Caco-2 (cell line): ENCODE measurements at regions of chr3 and their contacts with region 1.

Region 1: GRCh38 chr3:123285066-123285465 is 83.3 kb downstream of the SEC22A start:
- DNase-seq: no peak
- H3K4me3 ChIP-seq: no peak overlapping the region
- H3K4me3 Mint-ChIP-seq: no peak overlapping the region
- H3K27ac Mint-ChIP-seq: no peak overlapping the region
- H3K4me1 ChIP-seq: no peaks in the 10 kb centered on the region
- H3K4me1 Mint-ChIP-seq: no peaks in the 10 kb centered on the region
- H3K27me3 ChIP-seq: no peaks in the 10 kb centered on the region
- H3K27me3 Mint-ChIP-seq: peaks cover 3% of the 10 kb centered on the region
- CTCF ChIP-seq: no peak

Region 2: DNA sequence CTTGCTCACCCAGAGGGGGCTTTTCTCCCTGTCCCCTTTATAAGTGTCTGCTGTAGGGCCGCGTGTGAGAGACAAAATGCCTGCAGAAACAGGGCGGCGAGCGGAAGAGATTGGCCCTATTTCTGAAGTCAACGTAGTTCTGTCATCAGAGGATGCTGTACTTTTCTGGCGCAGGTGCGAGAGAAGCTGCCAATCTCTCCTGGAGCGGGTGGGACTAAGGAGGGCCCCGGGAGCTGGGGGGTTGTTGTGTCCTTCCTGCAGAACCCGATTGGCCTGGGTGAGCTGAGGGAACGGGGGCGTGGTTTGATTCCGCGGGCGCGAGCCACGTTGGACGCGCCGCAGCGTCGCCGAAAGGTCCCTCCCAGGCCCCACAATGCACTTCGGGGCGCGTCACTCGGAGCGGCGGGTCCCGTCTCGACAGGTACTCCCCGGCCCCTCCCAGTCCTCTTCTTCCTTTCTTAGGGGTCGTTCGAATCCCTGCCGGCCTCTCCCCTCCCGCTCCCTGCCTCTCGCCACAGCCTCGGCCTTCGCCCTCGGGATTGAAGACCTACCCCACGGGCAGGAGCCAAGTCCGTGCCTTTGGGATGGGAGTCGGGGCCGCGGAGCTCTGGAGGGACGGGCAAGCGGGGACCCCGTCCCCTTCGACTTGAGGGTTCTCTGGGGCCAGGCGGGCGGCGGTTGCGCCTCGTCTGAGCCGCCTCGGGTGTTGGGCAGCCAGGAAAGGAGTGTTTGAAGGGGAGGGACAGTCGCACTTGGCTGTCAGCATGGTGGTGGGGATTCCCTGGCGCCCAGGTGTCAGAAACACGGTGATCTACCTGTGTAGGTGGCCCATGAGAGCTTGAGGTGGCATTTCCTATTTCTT is 83.3 kb before region 1 on chr3 and contains the start of gene SEC22A:
- CTCF ChIA-PET with region 1: no interaction called
- POLR2A ChIA-PET with region 1: no interaction called
- intact Hi-C with region 1: no loop called
- DNase-seq: peak; percentile 92 to 95
- H3K4me3 ChIP-seq: peak within 1 kb of the TSS; percentile 99
- H3K4me3 Mint-ChIP-seq: peak within 1 kb of the TSS; percentile 94
- H3K27ac Mint-ChIP-seq: peak within 1 kb of the TSS; percentile 93
- H3K4me1 ChIP-seq: peaks cover 10% of the 10 kb centered on the region
- H3K4me1 Mint-ChIP-seq: peaks cover 11% of the 10 kb centered on the region
- H3K27me3 ChIP-seq: no peaks in the 10 kb centered on the region
- H3K27me3 Mint-ChIP-seq: no peaks in the 10 kb centered on the region
- CTCF ChIP-seq: no peak
- total RNA-seq, gene SEC22A: 12.5 and 17.7 TPM in 2 replicates

Region 3: DNA sequence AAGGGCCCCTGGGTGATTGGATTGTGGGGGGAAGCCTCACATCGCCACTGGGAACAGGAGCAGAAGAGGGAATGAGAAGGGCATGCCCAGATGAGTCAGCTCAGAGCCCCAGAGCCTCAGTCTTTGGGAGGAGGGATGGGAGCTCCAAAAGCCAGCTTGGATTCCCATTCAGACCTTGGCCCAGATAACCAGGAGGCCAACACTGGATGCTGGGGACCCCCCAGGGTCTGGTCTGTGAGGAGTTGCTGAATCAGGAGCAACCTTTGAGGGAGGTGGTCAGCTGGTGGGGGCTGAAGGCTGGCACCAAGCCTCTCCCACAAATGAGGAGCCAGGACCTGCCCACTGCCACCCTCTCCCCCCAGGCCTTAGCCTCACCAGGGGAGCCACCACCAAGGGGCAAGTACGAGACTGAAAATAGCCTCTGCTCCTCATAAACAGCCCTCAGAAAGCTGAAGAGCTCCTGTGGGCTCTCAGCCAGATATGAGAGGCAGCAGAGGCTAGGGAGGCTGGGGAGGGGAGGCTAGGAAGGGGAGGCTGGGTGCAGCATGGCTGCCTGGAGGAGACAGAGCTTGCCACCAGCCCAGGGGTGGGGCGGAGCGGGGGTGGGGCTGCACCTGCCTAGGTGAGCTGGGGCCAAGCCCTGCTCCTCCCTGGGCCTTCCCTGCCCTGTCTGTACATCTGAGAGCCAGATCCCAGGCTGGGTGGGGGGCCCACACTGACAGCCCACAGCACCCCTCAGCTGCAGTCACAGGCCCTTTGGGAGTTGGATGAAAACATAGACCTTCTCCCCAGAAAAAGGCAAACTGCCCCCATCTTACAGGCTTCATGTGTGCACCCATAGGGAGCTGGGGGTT is 16.5 kb after region 1 on chr3:
- CTCF ChIA-PET with region 1: interaction called, 10 read pairs
- POLR2A ChIA-PET with region 1: no interaction called
- intact Hi-C with region 1: no loop called
- DNase-seq: no peak
- H3K4me3 ChIP-seq: no peak overlapping the region
- H3K4me3 Mint-ChIP-seq: no peak overlapping the region
- H3K27ac Mint-ChIP-seq: no peak overlapping the region
- H3K4me1 ChIP-seq: no peaks in the 10 kb centered on the region
- H3K4me1 Mint-ChIP-seq: no peaks in the 10 kb centered on the region
- H3K27me3 ChIP-seq: no peaks in the 10 kb centered on the region
- H3K27me3 Mint-ChIP-seq: no peaks in the 10 kb centered on the region
- CTCF ChIP-seq: no peak